ENCODE measurements at regions of chr12 and their contacts with region 1.

Region 1: DNA sequence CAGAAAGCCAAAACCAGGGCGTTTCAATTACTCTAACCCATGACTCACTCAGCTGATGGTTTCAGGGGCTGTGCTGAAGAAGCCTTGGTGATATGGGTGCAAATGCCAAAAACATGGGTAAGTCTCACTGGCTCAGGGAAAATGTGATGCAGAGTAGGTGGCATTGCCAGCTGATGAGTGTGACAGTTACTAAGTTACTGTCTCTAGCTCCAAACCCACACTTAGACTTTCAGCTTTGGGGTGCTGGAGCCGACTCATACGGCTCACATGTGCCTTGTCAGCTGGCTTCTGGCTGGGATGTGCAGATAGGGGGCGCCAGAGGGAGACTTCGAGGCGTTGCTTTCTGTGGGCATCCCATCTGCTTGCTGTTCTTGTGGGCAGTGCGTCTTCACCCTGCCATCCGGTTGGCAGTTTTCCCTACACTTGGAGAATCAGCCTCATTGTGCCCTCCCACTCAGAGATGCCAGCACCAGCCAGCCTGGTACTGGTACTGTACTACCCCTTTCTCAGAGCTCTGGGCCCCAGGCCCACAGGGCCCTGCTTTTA is 11.1 kb upstream of the KRT7 start:
- DNase-seq: peak; percentile 86
- ATAC-seq: peak; percentile 87
- H3K4me3 Mint-ChIP-seq: no peak overlapping the region
- H3K27ac Mint-ChIP-seq: no peak overlapping the region
- H3K4me1 Mint-ChIP-seq: peaks cover 9% of the 10 kb centered on the region
- H3K27me3 Mint-ChIP-seq: peaks cover 58% of the 10 kb centered on the region

Region 2: GRCh38 chr12:52069327-52070184 is 152.4 kb before region 1 on chr12 and contains the start of gene ATG101:
- CTCF ChIA-PET with region 1: no interaction called
- POLR2A ChIA-PET with region 1: no interaction called
- DNase-seq: peak; percentile 92
- ATAC-seq: peak; percentile 97
- H3K4me3 Mint-ChIP-seq: peak within 1 kb of the TSS; percentile 93
- H3K27ac Mint-ChIP-seq: peak within 1 kb of the TSS; percentile 99
- H3K4me1 Mint-ChIP-seq: peaks cover 54% of the 10 kb centered on the region
- H3K27me3 Mint-ChIP-seq: peaks cover 6% of the 10 kb centered on the region
- total RNA-seq, gene ATG101: 28.8 to 31.1 TPM

Region 3: GRCh38 chr12:52235822-52236692 is 14.1 kb after region 1 on chr12:
- CTCF ChIA-PET with region 1: interaction called, 30 read pairs
- POLR2A ChIA-PET with region 1: no interaction called
- DNase-seq: no peak
- ATAC-seq: no peak
- H3K4me3 Mint-ChIP-seq: no peak overlapping the region
- H3K27ac Mint-ChIP-seq: no peak overlapping the region
- H3K4me1 Mint-ChIP-seq: no peaks in the 10 kb centered on the region
- H3K27me3 Mint-ChIP-seq: peaks cover 42% of the 10 kb centered on the region

Region 4: DNA sequence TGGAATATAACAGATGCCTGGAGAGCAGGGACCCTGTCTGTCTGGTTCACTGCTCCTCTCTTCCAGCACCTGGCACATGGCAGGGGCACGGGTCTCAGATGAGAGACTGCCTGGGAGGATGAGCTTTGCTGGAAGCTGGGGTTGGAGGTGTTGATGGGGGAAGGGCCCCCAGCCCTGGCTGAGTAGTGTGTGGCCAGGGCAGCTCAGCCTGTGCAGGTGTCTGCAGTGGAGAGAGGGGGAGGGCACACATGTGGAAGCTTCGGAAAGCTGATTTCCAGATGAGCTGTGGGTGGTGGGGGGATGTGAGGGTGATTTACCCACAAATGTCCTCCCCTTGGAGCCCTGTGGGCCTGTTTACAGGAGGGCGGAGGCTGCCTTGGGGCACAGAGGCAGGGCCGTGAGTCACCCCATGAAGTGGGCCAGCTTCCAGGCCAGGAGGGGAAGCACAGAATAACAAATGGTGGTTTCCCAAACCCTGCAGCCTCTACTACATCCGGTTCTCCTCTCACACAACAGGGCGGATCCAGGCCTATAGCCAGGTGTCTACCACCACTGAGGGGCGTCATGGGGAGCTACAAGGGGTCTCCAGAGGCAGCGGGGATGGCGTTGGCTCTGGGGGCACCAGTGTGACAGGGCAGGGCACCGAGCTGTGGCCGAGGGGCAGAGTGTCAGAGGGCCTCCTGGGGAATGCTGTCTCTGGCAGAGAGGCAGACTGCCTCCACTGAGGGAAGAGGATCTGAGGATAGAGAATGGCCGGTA is 22.1 kb after region 1 on chr12:
- CTCF ChIA-PET with region 1: interaction called, 30 read pairs
- POLR2A ChIA-PET with region 1: no interaction called
- DNase-seq: peak; percentile 75
- ATAC-seq: peak; percentile 93
- H3K4me3 Mint-ChIP-seq: peak overlapping the region; percentile 69
- H3K27ac Mint-ChIP-seq: peak overlapping the region; percentile 91
- H3K4me1 Mint-ChIP-seq: peaks cover 67% of the 10 kb centered on the region
- H3K27me3 Mint-ChIP-seq: peaks cover 5% of the 10 kb centered on the region

Region 5: DNA sequence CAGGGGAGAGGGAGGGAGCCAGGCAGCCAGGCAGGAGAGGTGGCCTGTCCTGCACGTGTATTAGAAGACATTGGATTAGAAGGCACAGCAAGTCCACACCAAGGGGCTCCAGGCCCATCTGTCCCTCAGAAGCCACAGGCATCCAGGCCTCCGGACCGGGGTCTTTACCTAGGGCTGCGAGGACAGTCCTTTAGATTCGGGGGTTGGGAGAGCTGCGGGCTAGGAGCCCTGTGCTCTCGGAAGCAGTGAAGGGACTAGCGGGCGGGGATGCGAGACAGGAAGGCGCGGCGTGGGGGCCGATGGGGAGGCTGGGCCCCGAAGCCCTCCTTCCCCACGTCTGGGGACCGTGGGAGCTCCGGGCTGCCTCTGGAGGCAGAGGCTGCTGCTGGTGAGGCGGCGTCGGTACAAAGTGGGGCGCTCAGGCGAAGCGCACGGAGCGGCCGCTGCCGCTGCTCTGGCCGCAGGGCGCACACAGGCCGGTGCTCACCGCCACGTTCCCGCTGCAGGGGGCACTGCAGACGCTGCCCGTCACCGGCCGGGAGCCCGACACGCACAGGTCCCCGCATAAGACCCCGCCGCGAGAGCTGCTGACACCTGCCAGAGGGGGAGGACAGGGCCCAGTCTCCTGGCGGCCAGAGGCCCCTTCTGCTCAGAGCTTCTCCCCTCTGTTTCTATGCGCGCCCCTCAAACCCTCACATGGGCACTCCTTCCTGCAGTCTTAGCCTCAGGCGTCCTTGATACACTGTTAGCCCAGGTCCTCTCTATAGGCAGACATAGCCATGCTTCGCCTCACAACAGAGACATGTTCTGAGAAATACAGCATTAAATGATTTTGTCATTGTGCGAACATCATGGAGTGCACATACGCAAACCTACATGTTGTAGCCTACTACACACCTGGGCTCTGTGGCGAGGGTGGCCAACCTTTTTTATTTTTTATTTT is 28.3 kb after region 1 on chr12:
- CTCF ChIA-PET with region 1: interaction called, 16 read pairs
- POLR2A ChIA-PET with region 1: interaction called, 3 read pairs
- DNase-seq: no peak
- ATAC-seq: no peak
- H3K4me3 Mint-ChIP-seq: no peak overlapping the region
- H3K27ac Mint-ChIP-seq: peak overlapping the region; percentile 77
- H3K4me1 Mint-ChIP-seq: peaks cover 92% of the 10 kb centered on the region
- H3K27me3 Mint-ChIP-seq: peaks cover 16% of the 10 kb centered on the region